ENCODE measurements at regions of chr11 and their contacts with region 1.

Region 1: DNA sequence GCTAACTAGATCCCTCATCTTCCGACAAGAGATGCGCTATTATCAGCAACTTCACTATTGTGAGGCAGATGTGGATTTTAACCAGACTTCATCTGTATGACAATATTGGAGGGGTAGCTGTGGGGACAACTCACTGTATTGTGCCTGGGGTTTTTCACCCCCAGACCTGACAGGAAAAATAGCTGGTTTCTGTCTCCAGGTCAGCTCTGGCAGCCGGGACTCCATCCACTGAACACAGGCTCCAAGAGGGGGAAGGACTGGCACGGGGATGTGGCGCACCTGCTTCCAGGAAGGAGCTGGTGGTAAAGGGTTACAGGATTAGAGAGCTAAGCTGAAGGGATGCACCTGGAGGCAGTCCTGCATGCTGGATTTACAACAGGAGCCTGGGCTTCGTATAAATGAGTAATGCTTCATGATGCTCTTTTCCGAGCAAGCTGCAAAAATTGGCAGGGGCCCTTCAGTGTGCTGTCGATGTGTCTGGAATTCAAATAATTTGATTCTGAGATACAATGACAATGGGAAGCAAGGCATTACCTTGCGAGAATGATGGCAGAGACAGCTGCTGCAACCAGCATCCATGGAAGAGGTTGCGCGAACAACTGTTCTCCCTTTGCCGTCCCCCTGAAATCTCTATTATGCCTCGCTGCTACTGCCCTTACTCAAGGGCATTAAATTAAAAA is 49.5 kb downstream of the LMO2 start:
- DNase-seq: no peak
- H3K4me3 ChIP-seq: no peak overlapping the region
- H3K27ac ChIP-seq: no peak overlapping the region
- H3K4me1 ChIP-seq: no peaks in the 10 kb centered on the region
- H3K27me3 ChIP-seq: no peaks in the 10 kb centered on the region
- CTCF ChIP-seq: no peak

Region 2: GRCh38 chr11:34086554-34087283 is 244.3 kb after region 1 on chr11:
- CTCF ChIA-PET with region 1: interaction called, 16 read pairs
- POLR2A ChIA-PET with region 1: no interaction called
- intact Hi-C with region 1: no loop called
- DNase-seq: no peak
- H3K4me3 ChIP-seq: no peak overlapping the region
- H3K27ac ChIP-seq: no peak overlapping the region
- H3K4me1 ChIP-seq: no peaks in the 10 kb centered on the region
- H3K27me3 ChIP-seq: no peaks in the 10 kb centered on the region
- CTCF ChIP-seq: no peak

Measured in PC-9 (cell line).